WTC11 (cell line): ENCODE measurements at regions of chr15 and their contacts with region 1.

Region 1: GRCh38 chr15:73972984-73973682 is 19.0 kb downstream of the STOML1 start:
- DNase-seq: peak; percentile 90
- ATAC-seq: peak; percentile 93
- H3K4me3 Mint-ChIP-seq: peak overlapping the region; percentile 48
- H3K27ac Mint-ChIP-seq: no peak overlapping the region
- H3K4me1 Mint-ChIP-seq: peaks cover 13% of the 10 kb centered on the region
- H3K27me3 Mint-ChIP-seq: peaks cover 15% of the 10 kb centered on the region
- CTCF ChIP-seq: peak; percentile 31; the same call in 1 of the 2 replicates

Region 2: DNA sequence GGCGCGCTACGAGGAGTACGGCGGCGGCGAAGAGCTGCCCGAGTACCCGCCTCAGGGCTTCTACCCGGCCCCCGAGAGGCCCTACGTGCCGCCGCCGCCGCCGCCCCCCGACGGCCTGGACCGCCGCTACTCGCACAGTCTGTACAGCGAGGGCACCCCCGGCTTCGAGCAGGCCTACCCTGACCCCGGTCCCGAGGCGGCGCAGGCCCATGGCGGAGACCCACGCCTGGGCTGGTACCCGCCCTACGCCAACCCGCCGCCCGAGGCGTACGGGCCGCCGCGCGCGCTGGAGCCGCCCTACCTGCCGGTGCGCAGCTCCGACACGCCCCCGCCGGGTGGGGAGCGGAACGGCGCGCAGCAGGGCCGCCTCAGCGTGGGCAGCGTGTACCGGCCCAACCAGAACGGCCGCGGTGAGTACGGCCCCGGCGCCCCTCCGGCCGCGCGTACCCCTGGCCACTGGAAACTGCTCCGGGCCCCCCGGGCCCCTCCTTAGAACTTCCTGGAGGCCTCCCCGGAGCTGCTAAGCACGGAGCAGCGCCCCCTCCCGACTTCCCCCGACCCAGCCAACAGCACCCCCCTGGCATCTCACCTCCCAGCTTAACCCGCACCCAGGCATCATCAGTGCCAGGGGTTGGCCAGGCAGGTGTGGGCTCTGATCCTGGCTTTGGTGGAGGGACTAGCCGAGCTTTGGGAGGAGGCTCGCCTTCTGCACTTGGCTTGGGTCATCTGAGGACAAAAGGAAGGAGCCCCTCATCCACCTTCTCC is 45.5 kb before region 1 on chr15:
- CTCF ChIA-PET with region 1: interaction called, 17 read pairs
- POLR2A ChIA-PET with region 1: no interaction called
- DNase-seq: peak; percentile 74
- ATAC-seq: peak; percentile 38
- H3K4me3 Mint-ChIP-seq: peak overlapping the region; percentile 68
- H3K27ac Mint-ChIP-seq: no peak overlapping the region
- H3K4me1 Mint-ChIP-seq: peaks cover 43% of the 10 kb centered on the region
- H3K27me3 Mint-ChIP-seq: peaks cover 11% of the 10 kb centered on the region
- CTCF ChIP-seq: peak; percentile 33; the same call in 1 of the 2 replicates

Region 3: GRCh38 chr15:73991726-73992593 is 18.8 kb after region 1 on chr15 and contains the start of gene STOML1:
- CTCF ChIA-PET with region 1: interaction called, 69 read pairs
- POLR2A ChIA-PET with region 1: no interaction called
- DNase-seq: peak; percentile 97
- ATAC-seq: peak; percentile 68
- H3K4me3 Mint-ChIP-seq: peak within 1 kb of the TSS; percentile 74
- H3K27ac Mint-ChIP-seq: no peak within 1 kb of the TSS
- H3K4me1 Mint-ChIP-seq: peaks cover 30% of the 10 kb centered on the region
- H3K27me3 Mint-ChIP-seq: peaks cover 13% of the 10 kb centered on the region
- CTCF ChIP-seq: peak; percentile 81
- total RNA-seq, gene STOML1: 5.0 to 5.5 TPM (median 5.4 TPM) in 3 replicates

Region 4: DNA sequence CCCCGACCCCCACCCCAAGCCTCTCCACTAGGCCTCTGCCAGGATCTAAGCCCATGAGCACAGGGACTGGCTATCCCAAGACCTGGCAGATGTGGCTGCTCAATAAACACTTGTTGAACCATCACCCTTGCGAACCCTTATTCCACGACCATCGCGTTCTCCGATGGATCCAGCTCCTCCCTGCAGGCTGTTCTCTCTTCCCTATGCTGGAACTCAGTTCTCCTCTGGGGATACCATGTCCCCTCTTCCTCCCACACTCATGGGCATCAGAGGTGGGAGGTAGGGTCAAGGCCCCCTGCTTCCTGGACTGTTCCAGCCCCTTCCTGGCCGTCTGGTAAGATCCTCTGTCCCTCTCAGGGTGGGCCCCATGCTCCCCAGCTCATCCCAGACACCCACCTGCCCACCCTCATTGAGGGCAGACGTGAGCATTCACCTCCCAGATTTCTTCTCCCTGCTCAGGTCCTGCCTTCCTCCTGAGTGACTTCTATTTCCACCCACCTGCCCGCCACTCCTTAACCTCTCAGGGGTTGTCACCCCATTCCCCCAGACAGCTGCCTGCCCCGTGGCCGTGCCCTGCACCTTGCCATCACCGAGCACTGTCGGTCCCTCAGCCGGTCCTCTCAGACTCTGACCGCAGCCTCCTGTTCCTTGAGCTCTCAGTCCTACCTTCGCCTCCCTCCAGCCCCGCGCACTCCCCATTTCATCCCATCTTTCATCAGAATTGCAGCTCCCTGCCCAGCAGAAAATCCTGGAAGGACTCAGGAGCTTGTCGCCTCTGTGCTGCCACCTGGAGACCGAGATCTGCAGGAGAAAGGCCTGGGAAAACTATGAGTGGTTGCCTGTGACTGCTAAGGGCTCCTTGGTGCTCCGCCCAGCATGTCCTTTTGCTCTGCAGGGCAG is 63.4 kb after region 1 on chr15:
- CTCF ChIA-PET with region 1: interaction called, 290 read pairs
- POLR2A ChIA-PET with region 1: interaction called, 3 read pairs
- DNase-seq: peak; percentile 86
- ATAC-seq: peak; percentile 86
- H3K4me3 Mint-ChIP-seq: no peak overlapping the region
- H3K27ac Mint-ChIP-seq: peak overlapping the region; percentile 31
- H3K4me1 Mint-ChIP-seq: peaks cover 39% of the 10 kb centered on the region
- H3K27me3 Mint-ChIP-seq: no peaks in the 10 kb centered on the region
- CTCF ChIP-seq: peak; percentile 29; the same call in 1 of the 2 replicates

Region 5: DNA sequence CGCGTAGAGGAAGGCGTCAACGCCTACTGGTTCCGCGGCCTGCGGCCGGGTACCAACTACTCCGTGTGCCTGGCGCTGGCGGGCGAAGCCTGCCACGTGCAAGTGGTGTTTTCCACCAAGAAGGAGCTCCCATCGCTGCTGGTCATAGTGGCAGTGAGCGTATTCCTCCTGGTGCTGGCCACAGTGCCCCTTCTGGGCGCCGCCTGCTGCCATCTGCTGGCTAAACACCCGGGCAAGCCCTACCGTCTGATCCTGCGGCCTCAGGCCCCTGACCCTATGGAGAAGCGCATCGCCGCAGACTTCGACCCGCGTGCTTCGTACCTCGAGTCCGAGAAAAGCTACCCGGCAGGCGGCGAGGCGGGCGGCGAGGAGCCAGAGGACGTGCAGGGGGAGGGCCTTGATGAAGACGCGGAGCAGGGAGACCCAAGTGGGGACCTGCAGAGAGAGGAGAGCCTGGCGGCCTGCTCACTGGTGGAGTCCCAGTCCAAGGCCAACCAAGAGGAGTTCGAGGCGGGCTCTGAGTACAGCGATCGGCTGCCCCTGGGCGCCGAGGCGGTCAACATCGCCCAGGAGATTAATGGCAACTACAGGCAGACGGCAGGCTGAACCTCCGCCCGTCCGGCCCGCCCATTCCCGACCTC is 161.4 kb after region 1 on chr15:
- CTCF ChIA-PET with region 1: interaction called, 13 read pairs
- POLR2A ChIA-PET with region 1: no interaction called
- DNase-seq: peak; percentile 84
- ATAC-seq: peak; percentile 43
- H3K4me3 Mint-ChIP-seq: peak overlapping the region; percentile 67
- H3K27ac Mint-ChIP-seq: no peak overlapping the region
- H3K4me1 Mint-ChIP-seq: peaks cover 65% of the 10 kb centered on the region
- H3K27me3 Mint-ChIP-seq: peaks cover 98% of the 10 kb centered on the region
- CTCF ChIP-seq: peak; percentile 62